ENCODE measurements at regions of chr18 and their contacts with region 1.

Region 1: DNA sequence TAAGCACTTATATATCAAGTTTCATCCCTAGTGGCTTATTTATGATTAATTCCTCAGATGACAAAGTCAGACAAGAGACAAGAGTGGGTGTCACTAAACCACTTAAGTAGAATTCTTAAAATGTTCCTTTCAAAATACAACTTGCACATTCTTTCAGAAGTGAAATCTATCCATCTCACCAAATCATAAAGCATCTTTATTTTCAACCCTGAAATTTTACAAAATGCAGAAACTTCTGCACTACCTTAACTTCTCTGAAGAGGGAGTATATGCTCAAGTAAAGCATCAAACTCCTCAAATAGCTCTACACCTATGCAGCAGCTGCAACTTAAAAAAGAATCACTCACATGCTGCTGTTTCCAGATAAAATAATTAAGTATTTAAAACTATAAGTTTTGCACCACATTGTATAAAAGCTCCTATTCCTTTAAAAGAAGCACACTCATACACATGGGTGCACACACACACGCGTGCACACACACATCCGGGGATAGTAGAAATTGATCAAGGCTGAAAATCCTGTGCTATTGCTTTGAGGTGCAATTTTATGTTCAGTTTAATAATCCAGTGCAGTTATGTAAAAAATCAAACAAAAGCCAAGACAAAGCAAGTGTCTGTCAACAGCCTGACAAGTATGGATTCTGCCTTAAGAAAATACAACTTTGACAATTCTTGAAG is 244.5 kb downstream of the TCF4 start:
- DNase-seq: no peak
- ATAC-seq: peak; percentile 46 to 57

Region 2: GRCh38 chr18:55275039-55275901 is 68.3 kb before region 1 on chr18:
- intact Hi-C with region 1: no loop called
- DNase-seq: peak; percentile 30
- ATAC-seq: peak; percentile 57 to 61

Region 3: DNA sequence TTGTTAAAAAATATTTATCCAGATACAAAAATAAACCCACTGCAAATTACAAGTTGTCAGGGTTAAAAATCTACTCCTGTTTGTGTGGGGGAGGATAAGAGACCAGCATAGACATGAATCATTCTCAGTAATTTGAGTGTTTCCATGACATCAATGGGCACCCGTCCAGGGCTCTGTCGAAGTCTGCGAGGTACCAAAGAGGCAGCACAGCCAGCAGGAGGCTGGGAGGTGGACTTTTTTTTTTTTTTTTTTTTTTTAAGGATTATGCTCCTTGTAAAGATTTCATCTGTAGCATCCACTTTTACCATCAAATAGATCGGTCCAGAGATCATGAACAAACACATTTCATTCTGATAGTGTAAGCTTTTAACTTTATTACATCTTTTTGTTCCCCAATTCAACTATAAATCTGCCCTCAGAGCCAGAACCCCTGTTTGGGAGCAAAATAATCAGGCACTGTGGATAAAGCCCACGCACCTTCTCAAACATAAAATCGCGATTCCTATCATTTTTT is 62.4 kb after region 1 on chr18:
- intact Hi-C with region 1: loop called in 1 of 2 experiments (anchors 10 kb)
- DNase-seq: peak; percentile 95
- ATAC-seq: peak; percentile 85 to 93

Region 4: GRCh38 chr18:55861266-55861665 is 517.7 kb after region 1 on chr18:
- intact Hi-C with region 1: loop called in 1 of 2 experiments (anchors 5 kb)
- DNase-seq: no peak
- ATAC-seq: no peak

Measured in left cardiac atrium (tissue), 4 donors.